ENCODE measurements at regions of chr17 and their contacts with region 1.

Region 1: DNA sequence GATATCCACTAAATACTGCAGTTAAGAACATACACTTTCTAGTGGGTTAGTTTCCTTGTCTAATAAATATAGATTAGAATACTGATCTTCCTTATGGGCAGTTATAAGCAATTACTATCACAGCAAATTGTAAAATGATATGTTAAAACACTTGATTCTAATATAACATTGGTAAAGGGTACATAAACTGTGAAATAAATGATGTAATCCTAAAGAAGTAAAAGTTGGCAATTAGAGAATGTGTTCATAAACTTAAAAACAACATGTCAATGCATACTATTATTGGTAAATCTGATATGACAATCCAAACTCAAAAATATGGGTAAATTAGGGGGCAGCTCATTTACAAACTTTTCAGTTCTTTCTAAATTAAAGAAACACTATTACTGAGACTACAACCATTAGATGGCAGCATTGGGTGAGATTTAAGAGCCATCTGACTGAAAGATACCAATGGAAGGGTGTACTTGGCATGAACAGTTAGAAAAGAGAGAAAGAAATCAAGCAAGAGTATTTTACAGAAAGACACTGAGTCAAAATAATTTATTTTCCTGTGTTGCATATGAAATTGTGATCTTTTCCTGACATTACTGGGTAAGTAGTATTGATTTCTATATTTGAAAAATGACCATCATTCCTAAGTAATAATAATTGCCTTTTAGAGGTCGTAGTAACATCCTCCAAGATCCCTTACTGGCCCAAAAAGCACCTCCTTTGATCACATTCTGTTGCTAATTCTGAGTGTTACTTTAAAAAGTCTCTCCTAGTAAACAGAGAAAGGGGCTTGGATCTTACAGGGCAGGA is 119.6 kb downstream of the SPAG9 start:
- DNase-seq: peak in 1 of 2 donors; percentile 47
- ATAC-seq: peak in 5 of 8 donors; percentile 58 to 74 (median 63)
- H3K4me3 ChIP-seq: no peak overlapping the region
- H3K27ac ChIP-seq: peak overlapping the region in 1 of 10 donors; percentile 2
- H3K4me1 ChIP-seq: peaks cover 0 to 5% (median 0%) of the 10 kb centered on the region in 9 donors
- H3K27me3 ChIP-seq: no peaks in the 10 kb centered on the region
- CTCF ChIP-seq: peak; percentile 34 to 75 (median 60)

Region 2: GRCh38 chr17:51050291-51051033 is 49.4 kb after region 1 on chr17:
- intact Hi-C with region 1: loop called in 4 of 10 experiments (anchors 5 to 10 kb)
- DNase-seq: no peak
- ATAC-seq: no peak
- H3K4me3 ChIP-seq: no peak overlapping the region
- H3K27ac ChIP-seq: no peak overlapping the region
- H3K4me1 ChIP-seq: peaks cover 0 to 36% (median 18%) of the 10 kb centered on the region in 9 donors
- H3K27me3 ChIP-seq: no peaks in the 10 kb centered on the region
- CTCF ChIP-seq: no peak

Region 3: DNA sequence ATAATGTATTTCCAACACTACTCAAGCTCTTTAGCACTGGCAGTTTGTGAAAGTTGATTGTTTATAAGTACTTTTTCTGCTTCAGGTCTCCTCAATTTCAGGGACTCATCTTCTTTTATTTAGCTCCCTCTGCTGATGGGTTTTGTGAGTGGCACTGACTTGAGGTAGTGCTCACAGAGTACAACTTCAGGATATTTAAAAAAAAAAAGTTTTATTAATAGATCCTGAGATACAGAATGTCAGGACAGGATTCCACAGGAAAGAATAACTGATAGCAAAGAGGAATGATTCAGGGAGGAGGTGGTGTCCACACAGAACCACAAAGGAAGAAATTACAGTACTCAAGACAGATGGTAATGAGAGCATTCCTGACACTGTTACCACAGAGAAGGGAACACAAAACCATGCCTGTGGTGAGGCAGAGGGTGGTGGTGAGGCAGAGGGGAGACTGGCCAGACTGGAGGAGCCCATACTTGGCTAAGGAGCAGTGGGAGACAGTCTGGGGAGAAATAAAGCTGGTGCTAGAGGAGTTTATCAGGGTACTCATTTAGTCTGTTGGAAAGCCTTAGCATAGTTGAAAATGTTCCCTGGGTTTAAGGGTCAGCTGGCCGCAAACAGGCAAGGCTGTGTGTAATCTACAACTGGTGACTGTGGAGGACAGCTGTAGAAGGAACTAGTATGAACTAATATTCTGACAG is 55.9 kb after region 1 on chr17:
- intact Hi-C with region 1: loop called in 4 of 10 experiments (anchors 5 to 10 kb)
- DNase-seq: peak in 1 of 2 donors; percentile 51
- ATAC-seq: peak; percentile 78 to 91 (median 82)
- H3K4me3 ChIP-seq: peak overlapping the region in 2 of 10 donors; percentile 1 to 9
- H3K27ac ChIP-seq: peak overlapping the region in 9 of 10 donors; percentile 49 to 76 (median 60)
- H3K4me1 ChIP-seq: peaks cover 0 to 29% (median 23%) of the 10 kb centered on the region in 9 donors
- H3K27me3 ChIP-seq: no peaks in the 10 kb centered on the region
- CTCF ChIP-seq: peak; percentile 22 to 74 (median 60)

Region 4: GRCh38 chr17:51153210-51154072 is 152.4 kb after region 1 on chr17 and contains the start of gene NME1:
- intact Hi-C with region 1: loop called (anchors 1 to 5 kb)
- DNase-seq: peak; percentile 92 to 98
- ATAC-seq: peak; percentile 96 to 99 (median 98)
- H3K4me3 ChIP-seq: peak within 1 kb of the TSS; percentile 51 to 90 (median 71)
- H3K27ac ChIP-seq: peak within 1 kb of the TSS; percentile 72 to 91 (median 82)
- H3K4me1 ChIP-seq: peaks cover 0 to 22% (median 12%) of the 10 kb centered on the region in 9 donors
- H3K27me3 ChIP-seq: no peaks in the 10 kb centered on the region
- CTCF ChIP-seq: peak; percentile 55 to 96 (median 76)
- total RNA-seq, gene NME1: 12.9 to 52.0 (median 21.8) TPM

Region 5: DNA sequence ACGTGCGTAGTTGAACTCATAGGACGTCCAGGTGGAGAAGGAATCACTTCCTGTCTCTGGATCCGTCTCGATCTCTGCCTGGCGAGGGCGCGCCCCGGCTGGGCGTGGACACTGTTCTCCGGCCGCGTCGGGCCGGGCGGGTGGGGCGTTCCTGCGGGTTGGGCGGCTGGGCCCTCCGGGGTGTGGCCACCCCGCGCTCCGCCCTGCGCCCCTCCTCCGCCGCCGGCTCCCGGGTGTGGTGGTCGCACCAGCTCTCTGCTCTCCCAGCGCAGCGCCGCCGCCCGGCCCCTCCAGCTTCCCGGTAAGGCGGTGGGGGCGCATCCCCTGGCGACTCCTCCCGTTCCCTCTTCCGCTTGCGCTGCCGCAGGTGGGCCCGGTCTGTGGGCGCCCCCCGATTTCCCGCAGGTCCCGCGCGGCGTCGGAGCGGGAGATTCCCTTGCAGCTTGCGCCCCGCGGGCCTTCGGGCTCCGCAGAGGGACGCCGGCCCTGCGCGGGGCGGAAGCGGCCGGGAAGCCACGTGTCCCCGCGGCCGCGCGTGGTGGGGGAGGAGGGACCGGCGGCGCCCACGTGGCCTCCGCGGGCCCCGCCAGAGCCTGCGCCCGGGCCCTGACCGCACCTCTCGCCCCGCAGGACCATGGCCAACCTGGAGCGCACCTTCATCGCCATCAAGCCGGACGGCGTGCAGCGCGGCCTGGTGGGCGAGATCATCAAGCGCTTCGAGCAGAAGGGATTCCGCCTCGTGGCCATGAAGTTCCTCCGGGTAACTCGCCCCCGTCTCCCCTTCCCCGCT is 165.4 kb after region 1 on chr17 and contains the start of gene NME2:
- intact Hi-C with region 1: loop called in 1 of 10 experiments (anchors 5 kb)
- DNase-seq: peak; percentile 90 to 93
- ATAC-seq: peak; percentile 95 to 97 (median 96)
- H3K4me3 ChIP-seq: peak within 1 kb of the TSS; percentile 65 to 97 (median 90)
- H3K27ac ChIP-seq: peak within 1 kb of the TSS; percentile 76 to 98 (median 93)
- H3K4me1 ChIP-seq: peaks cover 0 to 20% (median 14%) of the 10 kb centered on the region in 9 donors
- H3K27me3 ChIP-seq: no peaks in the 10 kb centered on the region
- CTCF ChIP-seq: peak in 1 of 9 donors; percentile 14
- total RNA-seq, gene NME2: 117 to 302 (median 208) TPM

Measured in heart right ventricle (tissue), 16 donors.